ENCODE measurements at regions of chr6 and their contacts with region 1.

Region 1: GRCh38 chr6:56484669-56485068 is 158.0 kb downstream of the DST start:
- DNase-seq: no peak
- ATAC-seq: no peak
- H3K4me3 ChIP-seq: no peak overlapping the region
- H3K27ac ChIP-seq: no peak overlapping the region
- H3K4me1 ChIP-seq: peaks cover 16% of the 10 kb centered on the region
- H3K27me3 ChIP-seq: no peaks in the 10 kb centered on the region
- CTCF ChIP-seq: no peak
- EP300 ChIP-seq: no peak
- POLR2A ChIP-seq: no peak
- RAD21 ChIP-seq: no peak

Region 2: GRCh38 chr6:56510984-56511531 is 26.4 kb after region 1 on chr6:
- CTCF ChIA-PET with region 1: no interaction called
- POLR2A ChIA-PET with region 1: no interaction called
- in situ Hi-C with region 1: no loop called
- intact Hi-C with region 1: loop called (anchors 2 kb)
- DNase-seq: peak; percentile 78
- ATAC-seq: peak; percentile 90
- H3K4me3 ChIP-seq: no peak overlapping the region
- H3K27ac ChIP-seq: peak overlapping the region; percentile 28
- H3K4me1 ChIP-seq: peaks cover 48% of the 10 kb centered on the region
- H3K27me3 ChIP-seq: no peaks in the 10 kb centered on the region
- CTCF ChIP-seq: no peak
- EP300 ChIP-seq: peak in 1 of 2 experiments; percentile 79; a peak in 2 of 4 replicates
- POLR2A ChIP-seq: no peak
- RAD21 ChIP-seq: no peak

Region 3: GRCh38 chr6:56570413-56571359 is 86.0 kb after region 1 on chr6:
- CTCF ChIA-PET with region 1: no interaction called
- POLR2A ChIA-PET with region 1: no interaction called
- in situ Hi-C with region 1: no loop called
- intact Hi-C with region 1: loop called (anchors 2 kb)
- DNase-seq: peak; percentile 60
- ATAC-seq: peak; percentile 96
- H3K4me3 ChIP-seq: no peak overlapping the region
- H3K27ac ChIP-seq: no peak overlapping the region
- H3K4me1 ChIP-seq: peaks cover 29% of the 10 kb centered on the region
- H3K27me3 ChIP-seq: no peaks in the 10 kb centered on the region
- CTCF ChIP-seq: peak; percentile 82
- EP300 ChIP-seq: no peak
- POLR2A ChIP-seq: no peak
- RAD21 ChIP-seq: peak; percentile 42; the same call in 1 of the 2 replicates

Region 4: DNA sequence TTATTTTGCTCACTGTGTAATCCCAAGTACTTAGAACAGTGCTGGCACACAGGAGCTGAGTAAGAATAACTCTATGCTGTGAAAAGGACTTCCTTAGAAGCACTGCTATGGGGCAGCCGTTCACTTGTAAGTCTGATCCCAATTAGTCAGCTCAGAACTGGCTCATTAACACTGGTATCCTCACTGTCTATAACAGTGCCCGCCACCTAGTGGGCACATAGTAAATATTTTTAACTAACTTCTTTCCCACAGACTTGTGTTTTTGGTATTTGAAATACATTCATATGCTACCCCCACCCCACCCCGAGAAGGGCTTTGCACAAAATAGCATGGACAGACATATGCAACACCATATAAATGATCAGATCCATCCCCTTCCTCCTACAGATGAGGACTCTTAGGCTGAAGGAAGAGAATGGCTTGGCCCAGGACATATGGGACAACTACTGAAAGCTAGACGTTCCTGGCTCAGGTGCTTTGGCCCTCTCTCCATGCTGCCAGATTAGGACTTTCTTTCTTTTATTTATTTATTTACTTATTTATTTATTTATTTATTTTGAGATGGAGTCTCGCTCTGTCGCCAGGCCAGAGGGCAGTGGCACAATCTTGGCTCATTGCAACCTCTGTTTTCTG is 110.9 kb after region 1 on chr6:
- CTCF ChIA-PET with region 1: no interaction called
- POLR2A ChIA-PET with region 1: no interaction called
- in situ Hi-C with region 1: no loop called
- intact Hi-C with region 1: loop called (anchors 5 kb)
- DNase-seq: peak; percentile 43
- ATAC-seq: peak; percentile 89
- H3K4me3 ChIP-seq: no peak overlapping the region
- H3K27ac ChIP-seq: no peak overlapping the region
- H3K4me1 ChIP-seq: no peaks in the 10 kb centered on the region
- H3K27me3 ChIP-seq: no peaks in the 10 kb centered on the region
- CTCF ChIP-seq: peak; percentile 74
- EP300 ChIP-seq: no peak
- POLR2A ChIP-seq: no peak
- RAD21 ChIP-seq: no peak

Region 5: DNA sequence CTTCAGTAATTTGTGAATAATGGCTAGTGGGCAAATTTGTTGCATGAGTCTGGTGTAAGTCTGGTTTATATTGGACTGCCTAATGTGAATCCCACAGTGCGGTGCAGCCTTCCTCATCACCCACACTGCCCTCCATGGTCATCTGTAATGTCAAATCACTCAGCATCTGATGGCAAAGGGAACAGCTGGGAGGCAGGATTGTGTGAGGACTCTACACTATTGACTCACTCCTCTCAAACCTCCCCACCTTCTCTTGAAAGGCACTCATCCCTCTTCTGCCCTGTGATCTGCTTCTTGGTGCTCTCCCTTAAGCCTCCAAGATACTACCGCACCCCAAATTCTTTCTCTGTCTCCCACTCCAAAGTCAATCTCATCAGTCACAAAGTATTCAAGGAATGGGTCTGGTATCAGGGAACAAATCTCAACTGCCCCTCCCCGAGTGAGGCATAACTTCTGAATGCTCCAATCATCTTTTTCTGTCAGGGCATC is 324.2 kb after region 1 on chr6:
- CTCF ChIA-PET with region 1: no interaction called
- POLR2A ChIA-PET with region 1: no interaction called
- in situ Hi-C with region 1: no loop called
- intact Hi-C with region 1: no loop called
- DNase-seq: no peak
- ATAC-seq: peak; percentile 36; the same call in 2 of the 3 replicates
- H3K4me3 ChIP-seq: no peak overlapping the region
- H3K27ac ChIP-seq: no peak overlapping the region
- H3K4me1 ChIP-seq: peaks cover under 1% of the 10 kb centered on the region; the same call in 1 of the 2 replicates
- H3K27me3 ChIP-seq: no peaks in the 10 kb centered on the region
- CTCF ChIP-seq: no peak
- EP300 ChIP-seq: no peak
- POLR2A ChIP-seq: no peak
- RAD21 ChIP-seq: no peak

Region 6: DNA sequence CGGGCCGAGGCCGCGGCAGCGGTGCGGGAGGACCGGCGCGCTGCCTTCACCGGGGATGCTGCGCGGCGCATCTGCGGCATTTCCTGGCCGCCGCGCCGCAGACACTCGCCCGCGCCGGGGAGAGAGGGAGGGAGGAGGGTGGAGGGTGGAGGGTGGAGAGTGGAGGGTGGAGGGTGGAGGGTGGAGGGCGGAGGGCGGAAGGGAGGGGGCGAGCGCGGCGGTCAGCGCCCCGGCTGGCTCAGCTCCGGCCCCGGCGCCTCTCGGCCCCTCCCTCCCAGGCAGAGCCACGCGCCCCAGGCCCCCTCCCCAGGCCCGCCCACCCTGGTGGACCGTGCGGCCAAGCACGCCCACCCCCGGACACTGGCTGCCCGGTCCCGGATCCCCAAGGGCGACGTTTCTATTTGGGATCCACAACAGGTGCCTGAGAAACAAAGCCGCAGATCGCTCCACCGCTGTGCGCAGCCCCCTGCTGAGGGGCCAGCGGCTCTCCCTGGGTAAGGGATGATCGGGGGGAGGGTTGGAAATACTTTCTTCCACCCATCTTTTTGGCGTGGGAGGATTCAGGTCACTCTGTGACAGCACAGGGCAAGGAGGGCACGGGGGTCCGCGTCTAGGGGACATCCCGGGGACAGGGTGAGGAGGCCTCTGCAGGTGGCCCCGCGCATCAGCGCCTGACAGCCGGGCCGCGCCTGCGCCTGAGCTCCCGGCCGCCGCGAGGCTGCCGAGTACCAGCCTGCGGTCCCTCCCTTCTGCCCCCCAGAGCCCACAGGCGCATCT is 359.1 kb after region 1 on chr6:
- CTCF ChIA-PET with region 1: no interaction called
- POLR2A ChIA-PET with region 1: no interaction called
- in situ Hi-C with region 1: no loop called
- intact Hi-C with region 1: no loop called
- DNase-seq: peak; percentile 77
- ATAC-seq: peak; percentile 99
- H3K4me3 ChIP-seq: peak overlapping the region; percentile 57 to 80 (median 74)
- H3K27ac ChIP-seq: no peak overlapping the region
- H3K4me1 ChIP-seq: peaks cover 8% of the 10 kb centered on the region
- H3K27me3 ChIP-seq: peaks cover 3 to 7% of the 10 kb centered on the region in 2 experiments; a peak in 3 of 5 replicates
- CTCF ChIP-seq: peak; percentile 75
- EP300 ChIP-seq: no peak
- POLR2A ChIP-seq: 0 out of 4 replicates have a peak, but pooled peaks of 1 of the 2 experiments have one; percentile 33
- RAD21 ChIP-seq: peak; percentile 85

Measured in HepG2 (cell line).